Activated T-helper 1 cell treated with anti-CD3 and anti-CD28 coated beads, Interleukin-12 subunit alpha, Interleukin-12 subunit beta, Interleukin-2, Interleukin-4 antibody, amounts not matched to agents 30 ng/mL and 10 ng/mL and 1 ng/mL, durations not matched to agents 14 hours and 24 hours and 36 hours (primary cell): ENCODE measurements at regions of chr17 and their contacts with region 1.

Region 1: DNA sequence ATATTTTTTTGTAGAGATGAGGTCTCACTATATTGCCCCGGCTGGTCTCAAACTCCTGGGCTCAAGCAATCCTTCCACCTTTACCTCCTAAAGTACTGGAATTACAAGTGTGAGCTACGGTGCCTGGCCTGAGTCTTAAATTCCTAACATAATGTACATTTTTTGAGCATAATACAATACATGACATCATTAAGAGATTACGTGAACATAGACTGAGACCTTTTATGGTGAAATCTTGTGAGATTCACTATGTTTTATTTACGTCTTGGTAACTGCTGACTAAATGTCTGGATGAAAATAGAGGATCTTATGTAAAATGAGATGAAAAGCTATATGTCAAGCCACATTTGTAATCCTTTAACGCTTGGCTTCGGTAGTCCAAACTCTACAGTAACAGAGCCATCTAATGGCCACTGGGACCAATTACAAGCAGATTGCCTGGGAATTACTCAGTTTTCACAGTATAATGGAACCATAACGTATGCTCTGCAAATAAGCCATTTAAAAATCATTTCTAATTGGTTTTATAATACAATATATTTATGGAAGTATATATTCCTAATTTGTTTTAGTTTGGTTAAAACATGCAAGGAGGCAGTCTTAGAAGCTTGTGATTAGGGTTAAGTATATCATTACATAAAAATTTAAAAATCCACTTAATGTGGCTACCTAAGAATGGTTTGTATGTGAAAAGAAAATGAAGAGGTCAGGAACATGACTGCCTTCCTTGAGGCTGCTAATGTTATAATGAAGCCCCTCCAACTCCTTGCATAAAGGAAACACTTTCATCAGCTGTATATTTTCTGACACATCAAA is 8.1 kb upstream of the EFCAB13 start:
- DNase-seq: peak; percentile 22
- H3K4me3 Mint-ChIP-seq: no peak overlapping the region
- H3K27ac Mint-ChIP-seq: no peak overlapping the region
- H3K4me1 Mint-ChIP-seq: no peaks in the 10 kb centered on the region
- H3K27me3 Mint-ChIP-seq: peaks cover 14% of the 10 kb centered on the region

Region 2: DNA sequence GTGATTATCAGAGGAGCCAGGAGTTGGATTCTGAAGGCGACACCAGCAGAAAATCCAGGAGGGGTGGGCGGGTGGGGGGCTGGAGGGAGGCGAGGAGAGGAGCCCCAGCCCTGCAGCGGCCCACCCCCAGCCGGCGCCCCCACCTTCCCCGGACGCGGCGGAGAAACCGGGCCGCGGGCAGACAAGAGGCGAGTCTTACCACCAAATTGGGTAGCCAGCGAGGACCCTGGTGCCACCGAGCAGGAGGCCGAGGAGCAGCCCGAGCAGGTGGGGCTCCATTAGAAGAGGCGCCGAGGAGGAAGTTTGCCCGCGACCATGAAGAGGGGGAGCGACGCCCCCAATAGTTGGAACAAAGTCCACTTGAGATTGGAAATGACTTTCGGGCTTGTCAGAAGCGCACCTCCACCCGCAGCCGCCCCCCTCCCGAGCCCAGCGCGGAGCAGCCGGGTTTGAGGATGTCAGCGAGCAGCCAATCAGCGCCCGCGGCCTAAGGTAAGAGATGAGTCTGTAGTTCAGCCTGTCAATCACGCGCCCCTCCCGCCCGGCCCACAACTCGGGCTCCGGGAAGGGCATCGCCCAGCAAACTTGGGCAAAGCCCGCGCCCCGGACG is 497.2 kb before region 1 on chr17 and contains the start of gene WNT3:
- intact Hi-C with region 1: no loop called
- DNase-seq: peak; percentile 29
- H3K4me3 Mint-ChIP-seq: peak within 1 kb of the TSS; percentile 68
- H3K27ac Mint-ChIP-seq: no peak within 1 kb of the TSS
- H3K4me1 Mint-ChIP-seq: no peaks in the 10 kb centered on the region
- H3K27me3 Mint-ChIP-seq: peaks cover 72% of the 10 kb centered on the region
- total RNA-seq, gene WNT3: 0.05 TPM in 1 of 2 replicates, not detected in the other

Region 3: DNA sequence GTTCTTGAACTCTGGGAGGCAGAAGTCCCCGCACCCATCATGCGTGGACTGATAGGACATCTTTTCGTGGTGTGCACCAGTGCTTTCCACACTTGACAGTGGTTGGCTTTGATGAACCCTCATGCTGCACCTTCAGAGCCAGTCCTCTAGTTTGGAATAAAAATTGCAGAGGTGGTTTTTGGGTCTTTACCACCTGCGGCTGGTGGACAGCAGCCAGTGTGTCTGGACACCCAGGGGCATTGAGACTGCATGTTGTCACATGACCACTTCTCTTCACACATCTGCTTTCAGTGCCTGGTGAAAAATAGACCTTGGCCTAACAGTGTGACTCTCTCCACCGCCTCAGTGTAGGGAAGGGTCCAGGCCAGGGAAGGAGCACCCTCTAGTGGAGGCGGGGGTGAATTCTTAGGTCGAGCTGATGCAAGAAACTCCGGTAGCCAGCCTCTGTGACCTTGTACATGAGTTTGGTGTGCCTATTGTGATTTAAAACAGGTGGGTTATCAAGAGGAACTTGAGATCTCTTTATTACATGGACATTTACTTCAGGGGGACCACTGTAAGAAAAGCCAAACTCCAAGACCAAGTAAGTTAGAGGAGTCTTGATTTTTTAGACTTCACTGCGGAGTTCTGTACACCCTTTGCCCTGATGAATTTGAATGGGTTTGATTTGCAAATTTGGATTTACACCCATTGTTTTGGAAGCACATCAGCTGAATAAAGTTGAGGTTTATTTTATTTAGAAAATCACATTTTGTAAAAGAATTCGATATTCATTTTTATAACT is 374.8 kb before region 1 on chr17:
- intact Hi-C with region 1: loop called (anchors 2 kb)
- DNase-seq: peak; percentile 51
- H3K4me3 Mint-ChIP-seq: no peak overlapping the region
- H3K27ac Mint-ChIP-seq: peak overlapping the region; percentile 44
- H3K4me1 Mint-ChIP-seq: peaks cover 14% of the 10 kb centered on the region
- H3K27me3 Mint-ChIP-seq: peaks cover 1% of the 10 kb centered on the region

Region 4: DNA sequence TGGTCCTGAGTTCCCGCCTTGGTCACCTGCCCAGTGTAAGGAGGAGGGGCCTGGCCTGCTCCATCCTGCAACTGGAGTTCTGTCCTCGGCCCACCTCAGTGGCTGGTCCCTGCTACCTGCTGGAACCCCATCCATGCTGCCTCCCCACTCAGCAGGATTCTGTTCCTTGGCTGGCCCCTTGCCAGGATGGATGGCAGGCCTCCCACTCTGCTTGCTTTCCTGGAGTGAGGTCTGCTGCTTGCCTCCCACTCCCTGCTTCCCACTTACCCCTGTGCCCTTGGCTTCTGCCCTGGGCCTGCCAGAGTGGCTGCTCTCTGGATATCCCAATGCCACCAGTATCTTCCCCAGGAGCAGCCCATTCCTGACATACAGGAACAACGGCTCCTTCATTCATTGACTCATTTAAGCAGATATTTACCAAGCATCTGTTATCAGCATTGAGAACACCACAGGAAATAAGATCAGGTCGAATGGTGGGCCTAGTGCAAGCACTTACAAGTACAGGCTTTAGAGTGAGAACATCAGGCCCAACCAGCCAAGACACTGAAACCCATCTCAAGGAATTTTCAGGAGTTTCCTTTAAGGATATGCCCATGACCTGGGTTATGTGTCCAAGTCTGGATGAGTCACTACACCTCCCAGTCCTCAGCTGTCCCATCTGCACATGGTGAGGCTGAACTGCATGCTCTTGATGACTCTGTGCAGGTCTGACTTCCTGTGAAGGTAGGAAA is 319.7 kb before region 1 on chr17:
- intact Hi-C with region 1: loop called (anchors 1 kb)
- DNase-seq: no peak
- H3K4me3 Mint-ChIP-seq: no peak overlapping the region
- H3K27ac Mint-ChIP-seq: no peak overlapping the region
- H3K4me1 Mint-ChIP-seq: no peaks in the 10 kb centered on the region
- H3K27me3 Mint-ChIP-seq: peaks cover 2% of the 10 kb centered on the region

Region 5: GRCh38 chr17:47162013-47162622 is 153.5 kb before region 1 on chr17:
- intact Hi-C with region 1: loop called (anchors 5 kb)
- DNase-seq: no peak
- H3K4me3 Mint-ChIP-seq: peak overlapping the region; percentile 24
- H3K27ac Mint-ChIP-seq: peak overlapping the region; percentile 13
- H3K4me1 Mint-ChIP-seq: peaks cover 26% of the 10 kb centered on the region
- H3K27me3 Mint-ChIP-seq: no peaks in the 10 kb centered on the region

Region 6: GRCh38 chr17:47229535-47230443 is 85.9 kb before region 1 on chr17:
- intact Hi-C with region 1: loop called (anchors 1 kb)
- DNase-seq: peak; percentile 60
- H3K4me3 Mint-ChIP-seq: peak overlapping the region; percentile 47
- H3K27ac Mint-ChIP-seq: no peak overlapping the region
- H3K4me1 Mint-ChIP-seq: peaks cover 14% of the 10 kb centered on the region
- H3K27me3 Mint-ChIP-seq: peaks cover 10% of the 10 kb centered on the region

Region 7: DNA sequence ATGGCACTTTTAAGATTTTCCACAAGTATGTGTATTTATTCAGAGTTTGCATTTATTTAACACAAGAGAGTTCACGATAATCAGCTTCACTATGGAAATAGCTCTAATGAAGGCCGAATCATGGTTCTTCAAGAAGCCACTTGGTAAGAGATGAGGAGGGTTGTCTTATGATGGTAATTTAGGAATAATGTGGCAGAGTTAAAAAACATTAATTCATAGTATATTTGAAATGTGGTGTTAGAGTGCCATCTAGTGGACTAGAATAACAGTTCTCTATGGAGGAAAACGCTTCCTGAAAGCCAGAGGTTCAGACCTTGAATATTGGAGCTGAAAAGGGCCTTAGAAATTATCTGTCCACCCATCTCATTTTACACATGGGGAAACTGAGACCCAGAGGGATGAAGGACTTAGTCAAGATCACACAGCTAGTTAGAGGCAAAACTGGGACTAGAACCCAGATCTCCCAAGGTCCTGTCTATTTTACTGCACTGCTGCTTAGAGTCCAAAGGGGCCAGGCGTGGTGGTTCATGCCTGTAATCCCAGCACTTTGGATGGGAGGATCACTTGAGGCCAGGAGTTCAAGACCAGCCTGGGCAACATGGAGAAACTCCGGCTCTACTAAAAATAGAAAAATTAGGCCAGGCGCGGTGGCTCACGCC is 300.2 kb after region 1 on chr17:
- intact Hi-C with region 1: loop called (anchors 5 kb)
- DNase-seq: no peak
- H3K4me3 Mint-ChIP-seq: no peak overlapping the region
- H3K27ac Mint-ChIP-seq: no peak overlapping the region
- H3K4me1 Mint-ChIP-seq: peaks cover 27% of the 10 kb centered on the region
- H3K27me3 Mint-ChIP-seq: no peaks in the 10 kb centered on the region